Left ventricle myocardium superior (tissue), 1 donor: ENCODE measurements at regions of chr4 and their contacts with region 1.

Region 1: DNA sequence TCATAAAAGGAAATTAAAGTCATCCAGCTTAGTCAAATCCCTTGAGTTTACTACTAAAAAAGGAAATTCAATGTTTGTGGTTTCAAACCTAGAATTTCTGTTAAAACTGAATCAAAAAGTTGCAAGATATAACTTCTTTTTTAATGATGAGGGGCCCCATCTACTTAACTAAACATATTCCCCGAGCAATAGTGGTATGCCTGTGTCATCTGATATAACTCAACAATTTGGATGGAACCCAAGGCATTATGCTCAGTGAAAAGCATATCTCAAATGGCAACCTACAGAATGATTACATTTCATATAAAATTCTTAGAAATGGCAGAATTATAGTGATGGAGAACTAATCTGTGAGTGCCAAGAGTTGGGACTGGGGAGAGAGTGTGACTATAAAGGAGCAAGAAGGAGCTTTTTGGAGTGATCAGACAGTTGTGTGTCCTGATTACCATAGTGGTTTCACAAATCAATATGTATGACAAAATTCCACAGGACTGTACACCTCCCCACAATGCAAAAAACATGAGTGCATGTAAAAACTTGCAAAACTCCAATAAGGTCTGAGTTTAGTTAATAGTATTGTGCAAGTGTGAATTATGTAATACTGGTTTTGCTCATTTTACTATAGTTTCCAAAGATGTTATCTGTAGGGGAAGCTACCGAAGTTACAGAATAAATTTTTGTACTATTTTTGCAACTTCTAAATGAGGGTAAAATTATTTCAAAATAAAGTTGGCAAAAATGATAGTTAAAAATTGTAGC is 323.2 kb downstream of the ARHGAP24 start:
- DNase-seq: no peak
- ATAC-seq: no peak

Region 2: DNA sequence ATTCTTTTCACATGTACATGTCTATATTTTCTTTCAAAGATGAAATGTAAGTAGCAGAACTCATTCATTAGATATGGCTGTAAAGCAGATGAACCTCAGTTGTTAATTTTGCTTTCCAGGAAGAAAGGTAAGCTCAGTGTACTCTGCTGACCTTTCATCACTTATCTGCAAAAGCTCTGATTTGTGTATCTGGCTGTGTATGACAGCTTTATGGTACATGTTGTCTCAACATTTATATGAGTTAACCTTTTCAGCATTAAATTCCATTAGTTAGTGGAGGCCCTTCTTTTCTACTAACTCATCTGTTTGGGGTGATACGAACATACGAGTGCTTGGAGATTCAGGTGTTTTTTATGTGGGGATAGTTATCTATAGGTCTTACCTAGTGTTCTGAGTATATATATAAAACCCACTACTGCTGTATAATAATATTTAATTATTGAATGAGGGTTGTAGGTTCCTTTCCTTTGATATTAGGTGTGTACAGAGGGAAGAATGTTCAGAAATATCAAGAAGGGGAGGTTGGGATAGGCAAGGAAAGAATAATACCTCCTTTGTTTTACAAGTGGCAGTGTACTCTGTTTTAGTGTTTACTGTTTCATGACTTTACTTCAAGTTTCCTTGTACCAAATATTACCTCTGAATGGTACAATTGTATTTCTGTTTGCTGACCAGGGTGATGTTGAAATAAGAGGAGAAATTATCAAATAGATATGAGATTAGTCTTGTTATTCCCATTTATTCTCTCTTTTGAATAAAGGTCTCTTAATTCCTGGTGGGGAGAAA is 72.3 kb after region 1 on chr4:
- intact Hi-C with region 1: loop called (anchors 2 kb)
- DNase-seq: no peak
- ATAC-seq: no peak

Region 3: DNA sequence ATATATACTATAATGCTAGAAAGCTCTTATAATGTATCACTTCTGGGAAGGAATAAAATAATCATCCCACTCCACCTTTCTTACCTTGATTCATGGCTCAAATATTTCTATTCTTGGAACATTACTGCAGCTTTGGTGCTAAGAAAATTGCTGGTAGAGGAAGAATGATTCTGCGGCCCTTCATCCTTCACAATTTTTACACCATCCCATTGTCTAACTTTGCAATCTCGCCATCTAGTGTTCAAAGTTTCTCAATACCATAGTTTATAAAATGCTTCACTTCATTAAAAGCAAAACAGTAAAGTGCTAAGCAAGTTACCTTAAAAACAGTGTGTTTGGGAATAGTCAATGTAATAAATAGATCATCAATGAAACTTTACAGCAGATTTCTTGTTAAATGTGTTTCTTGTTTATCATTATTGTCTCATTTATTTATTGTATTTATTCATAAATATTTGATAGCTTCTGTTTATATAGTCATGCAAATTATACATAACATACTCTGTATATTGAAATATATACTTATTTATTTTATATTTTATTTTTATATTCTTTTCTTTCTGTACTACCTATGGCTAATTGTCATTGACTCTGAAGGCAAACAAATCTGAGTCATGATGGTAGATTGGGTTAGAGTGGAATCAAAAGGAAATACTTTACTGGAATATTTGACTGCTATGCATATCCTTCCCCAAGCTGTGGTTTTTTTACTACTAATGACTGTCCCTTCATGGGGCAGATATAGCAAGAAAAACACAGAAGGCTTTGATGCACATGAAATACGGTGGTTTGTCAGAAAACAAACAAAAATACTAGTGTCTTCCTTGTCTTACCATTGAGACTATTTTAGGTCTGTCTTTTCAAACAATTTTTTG is 171.0 kb after region 1 on chr4:
- intact Hi-C with region 1: loop called (anchors 5 kb)
- DNase-seq: no peak
- ATAC-seq: peak; percentile 47

Region 4: GRCh38 chr4:86401816-86402215 is 603.6 kb after region 1 on chr4:
- intact Hi-C with region 1: no loop called
- DNase-seq: no peak
- ATAC-seq: no peak